ENCODE measurements at regions of chr12 and their contacts with region 1.

Region 1: DNA sequence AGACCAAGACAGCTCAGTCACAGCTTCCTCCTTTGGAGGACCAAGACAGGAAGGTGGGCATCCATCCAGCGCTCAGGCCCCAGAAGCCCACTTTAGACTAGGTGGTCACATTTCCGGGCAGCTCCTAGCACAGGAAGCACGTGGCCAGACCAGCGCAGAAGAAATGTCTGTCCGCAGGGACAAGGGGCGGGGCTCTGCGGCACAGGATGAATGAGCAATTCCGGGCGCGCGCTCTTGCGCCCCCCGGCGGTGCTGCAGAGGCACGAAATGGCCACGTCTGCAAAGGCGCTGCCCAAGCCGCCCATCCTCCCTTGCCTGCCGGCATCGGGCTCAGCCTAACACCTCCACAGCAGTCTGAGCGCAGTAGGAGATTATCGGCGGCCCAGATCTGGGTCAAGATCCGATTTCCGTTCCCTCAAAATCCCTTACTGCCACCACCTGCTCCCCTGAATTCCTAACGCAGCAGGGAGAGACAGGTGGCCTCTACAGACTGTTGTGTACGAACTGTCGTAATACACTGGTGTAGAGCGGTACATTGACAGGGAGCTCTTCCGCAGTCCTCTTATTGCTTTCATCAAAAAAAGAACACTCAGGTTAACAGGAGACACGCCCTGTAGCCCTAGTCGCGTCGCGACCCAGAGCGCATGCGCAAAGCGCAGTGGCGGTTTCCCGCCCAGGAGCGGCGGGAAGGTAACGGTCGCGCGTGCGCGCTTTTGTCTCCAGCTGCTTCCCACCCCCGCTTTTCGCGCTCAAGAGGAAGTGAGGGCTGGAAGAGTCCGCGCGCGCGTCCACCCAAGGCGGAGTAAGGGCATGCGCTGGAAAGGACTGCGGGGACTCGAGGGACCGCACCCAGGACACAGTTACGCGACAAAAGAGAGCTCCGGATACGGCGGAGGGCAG is 794 bp downstream of the TUBA1B start:
- DNase-seq: peak; percentile 92
- H3K4me3 Mint-ChIP-seq: peak overlapping the region; percentile 86
- H3K27ac Mint-ChIP-seq: peak overlapping the region; percentile 91
- H3K4me1 Mint-ChIP-seq: peaks cover 8% of the 10 kb centered on the region
- H3K27me3 Mint-ChIP-seq: no peaks in the 10 kb centered on the region
- CTCF ChIP-seq: peak; percentile 72

Region 2: GRCh38 chr12:48988030-48988649 is 142.3 kb before region 1 on chr12:
- CTCF ChIA-PET with region 1: no interaction called
- intact Hi-C with region 1: no loop called
- DNase-seq: peak; percentile 62
- H3K4me3 Mint-ChIP-seq: no peak overlapping the region
- H3K27ac Mint-ChIP-seq: no peak overlapping the region
- H3K4me1 Mint-ChIP-seq: no peaks in the 10 kb centered on the region
- H3K27me3 Mint-ChIP-seq: peaks cover 87% of the 10 kb centered on the region
- CTCF ChIP-seq: peak; percentile 78

Region 3: DNA sequence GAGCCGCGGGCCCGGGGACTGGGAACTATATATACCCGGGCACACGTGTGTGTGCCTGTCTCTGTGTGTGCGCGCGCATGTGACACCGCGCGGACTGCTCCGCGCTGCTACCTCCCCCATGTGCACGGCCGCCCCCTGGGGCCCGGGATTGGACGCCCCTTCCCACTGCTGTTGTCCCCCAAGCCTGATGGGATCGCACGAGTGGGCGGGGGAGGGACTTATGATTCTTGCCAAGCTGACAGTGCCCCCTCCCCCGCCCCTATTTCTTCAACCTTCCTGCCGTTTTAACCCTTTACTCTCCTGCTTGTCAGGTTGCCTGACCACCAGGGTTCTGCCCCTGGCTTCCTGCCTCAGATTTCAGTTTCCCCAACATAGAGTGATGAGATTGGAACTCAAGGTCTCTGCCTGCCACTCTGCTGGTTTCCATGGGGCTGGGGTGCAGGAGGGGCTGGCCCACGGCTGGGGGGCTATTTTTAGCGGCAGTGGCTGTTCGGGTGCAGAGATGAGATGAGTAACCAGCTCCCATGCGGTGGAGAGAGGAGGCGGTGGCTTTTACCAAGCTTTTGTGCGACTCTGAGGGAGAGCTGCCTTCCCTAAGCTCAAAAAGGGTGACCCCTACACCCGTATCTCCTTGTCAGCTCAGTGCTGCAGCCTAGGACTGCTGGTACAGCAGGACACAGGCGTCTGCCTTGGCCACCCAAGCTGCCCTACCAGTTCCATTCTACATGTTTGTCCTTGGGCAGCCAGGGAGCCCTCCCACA is 130.8 kb before region 1 on chr12 and contains the start of gene DDN:
- CTCF ChIA-PET with region 1: no interaction called
- intact Hi-C with region 1: no loop called
- DNase-seq: no peak
- H3K4me3 Mint-ChIP-seq: peak within 1 kb of the TSS; percentile 68
- H3K27ac Mint-ChIP-seq: no peak within 1 kb of the TSS
- H3K4me1 Mint-ChIP-seq: peaks cover 17% of the 10 kb centered on the region
- H3K27me3 Mint-ChIP-seq: peaks cover 14% of the 10 kb centered on the region
- CTCF ChIP-seq: no peak
- total RNA-seq, gene DDN: 0.12 and 0.21 TPM in 2 replicates

Region 4: DNA sequence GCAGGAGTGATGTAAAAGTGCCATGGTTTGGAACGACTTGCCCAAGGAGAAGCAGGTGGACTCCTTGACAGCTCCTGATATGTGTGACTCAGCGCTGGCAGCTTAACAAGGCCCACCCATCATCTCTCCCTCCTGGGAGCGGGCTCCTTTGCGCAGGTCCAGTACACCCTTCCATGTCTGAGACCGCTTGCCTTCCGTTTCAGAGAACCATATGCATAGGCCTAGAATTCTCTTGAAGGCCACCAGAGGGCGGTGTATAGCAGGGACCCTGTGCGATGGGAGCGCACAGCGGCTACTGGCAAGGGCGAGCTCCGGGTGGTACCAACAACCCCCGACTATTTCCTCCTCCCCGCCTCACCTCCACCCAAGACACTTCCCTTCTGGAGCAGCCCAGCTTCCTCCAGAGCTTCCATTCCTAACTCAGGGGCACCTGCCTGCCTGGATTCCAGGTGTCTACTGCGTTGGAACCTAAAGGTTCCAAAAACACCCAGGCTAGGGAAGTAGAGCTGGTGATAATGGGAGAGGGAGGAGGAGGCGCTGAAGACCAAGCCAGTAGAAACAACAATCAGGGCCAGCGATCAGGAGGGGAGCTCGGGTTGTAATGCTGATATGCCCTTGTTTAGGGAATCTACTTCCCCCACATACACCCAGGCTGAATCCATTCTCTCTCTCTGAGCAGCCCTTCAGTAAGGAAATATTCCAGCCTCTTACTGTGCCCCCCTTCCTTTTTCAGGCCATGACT is 42.0 kb before region 1 on chr12:
- CTCF ChIA-PET with region 1: interaction called, 13 read pairs
- intact Hi-C with region 1: no loop called
- DNase-seq: peak; percentile 70
- H3K4me3 Mint-ChIP-seq: no peak overlapping the region
- H3K27ac Mint-ChIP-seq: no peak overlapping the region
- H3K4me1 Mint-ChIP-seq: no peaks in the 10 kb centered on the region
- H3K27me3 Mint-ChIP-seq: peaks cover 39% of the 10 kb centered on the region
- CTCF ChIP-seq: peak; percentile 55

Region 5: DNA sequence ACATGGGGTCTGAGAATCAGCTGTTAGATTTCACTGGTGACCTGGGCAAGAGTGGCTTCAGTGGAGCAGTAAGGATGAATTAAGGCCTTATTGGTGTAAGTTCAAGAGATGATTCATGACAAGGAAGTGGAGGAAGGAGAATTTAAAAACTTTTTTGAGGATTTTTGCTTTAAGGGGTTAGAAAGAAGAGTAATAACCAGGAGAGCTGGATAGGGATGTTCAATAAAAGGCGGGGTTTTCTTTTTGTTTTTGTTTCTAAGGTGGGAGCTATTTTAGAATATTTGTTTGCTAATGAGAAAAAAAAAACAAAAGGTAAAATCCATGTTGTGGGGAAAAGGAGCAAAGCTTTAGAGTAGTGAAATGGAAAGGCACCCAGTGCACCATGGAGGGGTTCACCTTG is 16.0 kb after region 1 on chr12:
- CTCF ChIA-PET with region 1: no interaction called
- intact Hi-C with region 1: no loop called
- DNase-seq: no peak
- H3K4me3 Mint-ChIP-seq: no peak overlapping the region
- H3K27ac Mint-ChIP-seq: no peak overlapping the region
- H3K4me1 Mint-ChIP-seq: no peaks in the 10 kb centered on the region
- H3K27me3 Mint-ChIP-seq: no peaks in the 10 kb centered on the region
- CTCF ChIP-seq: no peak

Region 6: DNA sequence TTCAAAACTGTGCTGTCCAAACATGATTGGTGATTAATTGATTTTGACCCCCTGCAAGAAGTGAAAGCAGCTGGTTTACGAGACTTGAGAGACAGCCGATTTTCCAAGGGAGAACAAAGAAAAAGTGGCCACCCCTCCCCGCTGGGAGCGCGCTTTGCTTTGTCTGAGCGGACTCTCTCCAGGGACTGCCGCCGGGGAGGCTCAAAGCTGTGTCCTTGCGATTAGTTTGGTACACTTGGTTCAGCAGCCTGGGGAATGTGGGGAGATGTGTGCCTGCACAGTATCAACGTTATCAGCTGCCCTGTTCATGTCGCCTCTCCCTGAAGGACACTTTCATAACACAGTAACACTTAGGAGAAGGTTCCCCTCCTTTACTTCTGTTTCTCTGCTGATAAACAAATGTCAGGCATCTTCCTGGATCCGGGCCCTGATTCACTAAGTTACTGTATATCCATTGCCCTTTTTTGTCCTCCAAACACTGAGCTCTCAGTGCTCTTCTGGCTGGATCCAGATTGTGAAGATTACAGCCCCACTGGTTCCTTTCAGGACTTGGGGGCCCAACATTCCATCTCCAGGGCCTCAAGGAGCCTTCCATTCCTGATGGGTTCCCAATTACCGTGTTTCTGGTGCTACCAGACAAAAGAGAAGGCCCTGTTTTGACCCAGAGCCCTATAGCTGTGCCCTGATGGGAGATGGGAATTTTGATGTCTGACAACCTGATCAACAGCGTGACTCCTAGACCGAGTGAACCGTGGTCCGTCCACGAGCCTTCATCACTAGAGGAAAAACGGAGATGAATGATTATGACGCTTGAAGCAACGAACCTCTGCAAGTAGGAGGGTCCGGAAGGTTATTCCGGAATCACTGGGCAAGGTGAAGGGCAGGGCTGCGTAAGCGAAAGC is 102.8 kb after region 1 on chr12:
- CTCF ChIA-PET with region 1: interaction called, 12 read pairs
- intact Hi-C with region 1: loop called (anchors 2 kb)
- DNase-seq: no peak
- H3K4me3 Mint-ChIP-seq: no peak overlapping the region
- H3K27ac Mint-ChIP-seq: no peak overlapping the region
- H3K4me1 Mint-ChIP-seq: no peaks in the 10 kb centered on the region
- H3K27me3 Mint-ChIP-seq: no peaks in the 10 kb centered on the region
- CTCF ChIP-seq: no peak

Region 7: GRCh38 chr12:49428793-49429192 is 298.4 kb after region 1 on chr12:
- CTCF ChIA-PET with region 1: no interaction called
- intact Hi-C with region 1: no loop called
- DNase-seq: no peak
- H3K4me3 Mint-ChIP-seq: no peak overlapping the region
- H3K27ac Mint-ChIP-seq: no peak overlapping the region
- H3K4me1 Mint-ChIP-seq: no peaks in the 10 kb centered on the region
- H3K27me3 Mint-ChIP-seq: no peaks in the 10 kb centered on the region
- CTCF ChIP-seq: no peak